GM10248 (cell line): ENCODE measurements at regions of chr6 and their contacts with region 1.

Region 1: DNA sequence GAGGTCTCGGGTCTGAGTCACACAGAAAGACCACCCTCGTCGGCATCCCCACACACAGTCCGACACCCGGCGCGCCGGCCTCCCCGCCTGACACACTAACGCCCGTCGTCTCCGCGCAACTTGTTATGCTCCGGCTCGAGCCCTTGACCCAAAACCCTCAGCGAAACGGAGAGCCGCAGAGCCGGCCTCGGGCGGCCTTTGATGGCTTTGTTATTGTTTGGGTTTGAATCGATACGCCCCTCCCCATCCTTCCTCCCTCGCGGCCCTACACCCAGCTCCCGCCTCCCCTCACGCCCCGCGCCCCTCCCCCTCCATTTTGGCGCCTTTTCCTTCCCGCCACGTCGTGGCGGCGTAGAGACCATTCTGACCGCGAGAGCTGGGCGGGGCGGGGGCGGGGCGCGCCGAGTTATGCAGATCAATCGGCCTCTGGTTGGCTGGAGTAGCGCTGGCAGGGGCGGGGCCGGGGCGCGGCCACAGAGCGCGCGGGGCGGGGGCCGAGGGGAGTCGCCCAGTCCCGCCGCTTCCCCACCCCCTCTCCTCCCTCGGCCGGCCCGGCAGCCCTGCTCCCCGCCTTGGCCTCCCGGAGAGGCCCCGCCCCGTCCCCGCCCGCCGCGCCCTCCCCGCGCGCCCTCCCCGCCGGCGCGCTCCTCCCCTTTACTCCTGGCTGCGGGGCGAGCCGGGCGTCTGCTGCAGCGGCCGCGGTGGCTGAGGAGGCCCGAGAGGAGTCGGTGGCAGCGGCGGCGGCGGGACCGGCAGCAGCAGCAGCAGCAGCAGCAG is at the start of gene PIM1:
- DNase-seq: peak; percentile 98
- CTCF ChIP-seq: no peak

Region 2: GRCh38 chr6:36765594-36766398 is 403.9 kb before region 1 on chr6:
- CTCF ChIA-PET with region 1: interaction called, 20 read pairs
- POLR2A ChIA-PET with region 1: no interaction called
- DNase-seq: peak; percentile 90
- CTCF ChIP-seq: peak; percentile 98

Region 3: GRCh38 chr6:37110500-37111461 is 58.9 kb before region 1 on chr6:
- CTCF ChIA-PET with region 1: interaction called, 16 read pairs
- POLR2A ChIA-PET with region 1: no interaction called
- DNase-seq: peak; percentile 54
- CTCF ChIP-seq: no peak

Region 4: GRCh38 chr6:37149745-37150144 is 19.9 kb before region 1 on chr6:
- CTCF ChIA-PET with region 1: interaction called, 10 read pairs
- POLR2A ChIA-PET with region 1: interaction called, 4 read pairs
- DNase-seq: no peak
- CTCF ChIP-seq: no peak

Region 5: GRCh38 chr6:37182736-37183590 is 13.3 kb after region 1 on chr6:
- CTCF ChIA-PET with region 1: interaction called, 25 read pairs
- POLR2A ChIA-PET with region 1: no interaction called
- DNase-seq: peak; percentile 52
- CTCF ChIP-seq: no peak

Region 6: GRCh38 chr6:37200085-37200484 is 30.4 kb after region 1 on chr6:
- CTCF ChIA-PET with region 1: interaction called, 17 read pairs
- POLR2A ChIA-PET with region 1: interaction called, 5 read pairs
- DNase-seq: no peak
- CTCF ChIP-seq: no peak